Dorsolateral prefrontal cortex (tissue), 120 donors: ENCODE measurements at regions of chr12 and their contacts with region 1.

Region 1: GRCh38 chr12:19181666-19182426 is 52.3 kb downstream of the PLEKHA5 start:
- DNase-seq: no peak
- H3K4me3 ChIP-seq: peak overlapping the region in 8 of 59 donors; percentile 8 to 37 (median 13)
- H3K27ac ChIP-seq: peak overlapping the region in 20 of 59 donors; percentile 4 to 60 (median 22)
- H3K27me3 ChIP-seq: no peaks in the 10 kb centered on the region
- CTCF ChIP-seq: peak in 55 of 56 donors; percentile 14 to 70 (median 49)

Region 2: DNA sequence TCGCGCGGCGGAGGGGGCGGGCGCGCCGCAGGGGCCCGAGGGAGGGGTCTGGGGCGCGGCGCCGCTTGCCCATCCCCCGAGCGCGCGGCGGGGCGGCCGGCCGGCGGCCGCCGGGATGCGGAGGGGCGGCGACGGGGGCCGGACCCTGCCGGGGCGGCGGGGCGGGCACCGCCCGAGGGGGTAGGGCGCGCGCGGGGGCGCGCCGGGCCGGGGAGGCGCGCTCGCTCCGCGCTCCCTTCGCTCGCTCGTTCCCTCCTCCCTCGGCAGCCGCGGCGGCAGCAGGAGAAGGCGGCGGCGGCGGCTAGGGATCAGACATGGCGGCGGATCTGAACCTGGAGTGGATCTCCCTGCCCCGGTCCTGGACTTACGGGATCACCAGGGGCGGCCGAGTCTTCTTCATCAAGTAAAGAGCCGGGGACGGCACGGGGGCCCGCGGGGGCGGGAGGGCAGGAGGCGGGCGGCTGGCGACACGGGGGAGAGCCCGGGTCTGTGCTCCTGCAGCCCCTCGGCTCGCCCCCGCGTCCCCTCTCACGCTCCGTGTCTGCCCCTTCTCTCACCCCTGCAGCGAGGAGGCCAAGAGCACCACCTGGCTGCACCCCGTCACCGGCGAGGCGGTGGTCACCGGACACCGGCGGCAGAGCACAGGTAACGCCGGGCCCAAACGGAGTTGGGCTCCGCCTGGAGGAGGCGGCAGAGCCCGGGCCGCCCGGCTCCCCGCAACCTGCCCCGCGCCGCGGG is 52.2 kb before region 1 on chr12 and contains the start of gene PLEKHA5:
- intact Hi-C with region 1: loop called in 1 of 2 experiments (anchors 5 kb)
- DNase-seq: peak; percentile 39 to 75 (median 54)
- H3K4me3 ChIP-seq: peak within 1 kb of the TSS; percentile 54 to 98 (median 90)
- H3K27ac ChIP-seq: peak within 1 kb of the TSS; percentile 81 to 98 (median 94)
- H3K27me3 ChIP-seq: no peaks in the 10 kb centered on the region
- CTCF ChIP-seq: peak in 23 of 56 donors; percentile 7 to 47 (median 24)
- total RNA-seq, gene PLEKHA5: 56.6 to 158 (median 109) TPM

Region 3: DNA sequence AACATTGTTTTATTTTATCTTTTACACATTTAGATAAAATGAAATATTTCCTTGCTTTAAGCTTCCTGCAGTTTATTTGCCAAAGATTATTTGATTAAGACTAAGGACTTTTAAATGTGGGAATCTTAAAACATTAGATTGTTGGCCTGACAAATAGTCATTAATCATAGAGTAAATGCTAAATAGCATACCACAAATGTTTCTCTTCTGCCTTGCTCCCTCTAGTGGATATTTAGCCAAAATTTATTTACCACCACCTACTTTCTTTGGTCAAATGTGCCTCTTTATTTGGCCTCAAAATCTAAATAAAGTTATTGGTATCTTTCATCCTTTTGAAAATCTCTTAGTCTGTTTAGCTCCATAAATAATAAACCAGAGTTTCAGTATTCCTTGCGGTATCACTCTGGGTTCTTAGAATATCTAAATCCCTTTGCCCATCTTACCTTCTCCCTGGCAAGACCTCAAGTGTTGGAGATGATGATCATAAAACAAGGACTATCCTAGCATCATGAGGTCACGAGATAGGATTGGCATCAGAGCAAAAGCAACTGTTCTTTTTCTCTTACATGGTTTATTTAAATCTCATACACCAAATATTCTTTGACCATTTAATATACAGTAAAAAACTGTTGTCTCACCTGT is 106.9 kb after region 1 on chr12:
- intact Hi-C with region 1: loop called (anchors 5 to 10 kb)
- DNase-seq: no peak
- H3K4me3 ChIP-seq: no peak overlapping the region
- H3K27ac ChIP-seq: no peak overlapping the region
- H3K27me3 ChIP-seq: no peaks in the 10 kb centered on the region
- CTCF ChIP-seq: peak; percentile 49 to 85 (median 69)